ENCODE measurements at regions of chr10 and their contacts with region 1.

Region 1: DNA sequence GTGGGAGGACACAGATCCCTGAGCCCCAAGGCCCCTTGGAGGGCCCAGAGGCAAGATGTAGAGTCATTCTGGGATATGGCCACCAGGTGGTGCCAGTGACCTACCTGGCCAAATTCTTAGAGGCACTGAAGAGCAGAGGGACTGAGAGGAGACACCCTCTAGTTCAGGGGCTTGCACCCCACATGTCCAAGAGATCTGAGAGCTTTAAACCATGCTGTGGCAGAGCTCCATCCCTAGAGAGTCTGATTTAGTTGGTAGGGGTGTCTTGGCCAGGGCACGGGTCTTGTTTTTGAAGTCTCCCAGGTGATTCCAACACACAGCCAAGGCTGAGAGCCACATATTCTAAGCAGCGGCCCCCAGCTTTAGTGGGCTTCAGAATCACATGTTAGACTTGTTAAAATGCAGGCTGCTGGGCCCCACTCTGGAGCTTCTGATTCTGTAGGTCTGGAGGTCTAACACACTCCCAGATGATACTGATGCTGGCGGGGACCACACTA is 52.5 kb downstream of the PRF1 start:
- DNase-seq: peak; percentile 53 to 65
- H3K4me3 ChIP-seq: no peak overlapping the region
- H3K27ac ChIP-seq: no peak overlapping the region
- H3K4me1 ChIP-seq: no peaks in the 10 kb centered on the region
- H3K27me3 ChIP-seq: no peaks in the 10 kb centered on the region
- CTCF ChIP-seq: peak; percentile 74 to 86 (median 83)
- POLR2A ChIP-seq: no peak

Region 2: DNA sequence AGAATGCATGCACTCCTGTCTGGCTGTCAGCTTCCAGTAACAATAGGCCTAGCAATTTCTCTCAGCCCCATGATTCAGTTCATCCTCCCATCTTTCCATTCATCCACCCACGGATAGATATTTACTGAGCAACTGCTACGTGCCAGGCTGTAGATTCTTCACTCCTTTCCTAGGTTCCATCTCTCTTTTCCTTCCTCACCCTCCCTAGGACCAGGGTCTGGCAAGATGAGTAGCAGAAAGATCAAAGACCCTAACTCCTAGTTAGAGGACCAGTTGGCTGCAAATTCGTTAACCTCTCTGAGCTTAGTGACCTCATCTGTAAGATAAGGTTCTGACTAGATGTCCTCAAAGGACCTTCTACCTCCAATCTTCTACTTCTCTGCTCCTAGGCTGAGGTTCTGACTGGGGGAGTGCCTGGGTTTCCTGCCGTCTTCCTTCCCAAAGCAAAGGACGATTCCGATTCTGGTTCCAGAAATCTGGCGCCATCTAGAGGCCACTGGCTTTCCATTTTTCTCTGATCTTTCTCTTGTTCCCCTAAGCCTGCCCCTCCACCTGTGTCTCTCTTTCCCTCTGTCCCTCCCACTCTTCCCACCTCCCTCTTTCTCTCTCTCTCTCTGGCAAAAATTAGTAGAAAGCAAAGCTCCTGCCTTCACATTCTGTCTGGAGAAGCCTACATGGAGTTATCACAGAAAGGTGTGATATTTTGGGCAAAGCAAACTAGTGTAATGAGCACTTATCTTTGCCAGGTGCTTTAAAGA is 208.9 kb after region 1 on chr10:
- intact Hi-C with region 1: loop called (anchors 10 kb)
- DNase-seq: peak in 1 of 2 donors; percentile 37
- H3K4me3 ChIP-seq: no peak overlapping the region
- H3K27ac ChIP-seq: no peak overlapping the region
- H3K4me1 ChIP-seq: no peaks in the 10 kb centered on the region
- H3K27me3 ChIP-seq: no peaks in the 10 kb centered on the region
- CTCF ChIP-seq: peak; percentile 31 to 72 (median 55)
- POLR2A ChIP-seq: no peak

Measured in breast epithelium (tissue), 4 donors.